Gastrocnemius medialis (tissue), 4 donors: ENCODE measurements at regions of chr10 and their contacts with region 1.

Region 1: DNA sequence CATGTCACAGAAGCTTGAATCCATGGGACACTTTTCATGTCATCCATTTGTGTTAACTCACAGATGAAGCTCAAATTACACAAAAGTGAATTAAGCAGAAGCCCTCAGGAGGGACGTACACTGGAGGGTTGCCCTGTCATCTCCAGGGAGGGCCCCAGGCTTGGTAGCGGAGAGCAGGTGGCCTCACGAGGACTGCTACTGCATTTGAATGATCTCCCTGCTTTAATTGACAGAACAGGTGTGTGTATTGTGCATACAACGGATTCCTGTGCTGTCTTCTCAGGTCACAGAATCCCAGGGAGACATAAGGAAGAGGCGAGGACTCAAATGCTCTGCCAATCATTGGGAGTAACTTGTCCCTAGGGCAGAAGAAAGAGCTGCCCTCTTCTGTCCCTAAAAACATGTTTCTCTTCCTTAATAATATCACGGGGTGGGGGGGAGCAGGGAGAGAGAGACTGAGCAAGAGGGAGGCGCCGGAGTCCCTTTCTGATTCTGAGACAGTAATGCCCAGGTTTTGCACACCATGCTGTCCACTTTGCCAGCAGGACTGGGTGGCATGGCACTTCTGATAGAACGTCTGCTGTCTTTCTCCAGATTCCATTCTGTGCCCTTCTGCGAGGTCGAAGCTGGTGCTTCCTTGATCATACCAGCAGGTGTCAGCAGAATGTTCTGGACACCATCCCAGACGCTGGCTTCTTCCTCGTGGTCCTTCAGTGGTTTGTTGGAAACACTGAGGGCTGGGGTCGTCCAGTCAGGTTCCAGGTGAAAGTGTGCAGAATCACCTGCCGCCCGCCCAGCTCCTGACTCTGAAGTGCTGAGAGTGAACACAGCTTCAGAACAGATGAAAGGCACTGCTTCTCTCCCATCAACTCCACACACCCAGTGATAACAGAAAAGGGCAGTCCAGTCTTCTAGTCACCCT is 26.2 kb upstream of the RASGEF1A start:
- DNase-seq: peak; percentile 14 to 43
- ATAC-seq: peak; percentile 68 to 91
- H3K4me3 ChIP-seq: peak overlapping the region in 2 of 4 donors; percentile 28
- H3K27ac ChIP-seq: no peak overlapping the region
- H3K4me1 ChIP-seq: peaks cover 6 to 7% of the 10 kb centered on the region in 2 donors
- H3K27me3 ChIP-seq: no peaks in the 10 kb centered on the region
- CTCF ChIP-seq: peak; percentile 45 to 76 (median 67)
- POLR2A ChIP-seq: no peak

Region 2: DNA sequence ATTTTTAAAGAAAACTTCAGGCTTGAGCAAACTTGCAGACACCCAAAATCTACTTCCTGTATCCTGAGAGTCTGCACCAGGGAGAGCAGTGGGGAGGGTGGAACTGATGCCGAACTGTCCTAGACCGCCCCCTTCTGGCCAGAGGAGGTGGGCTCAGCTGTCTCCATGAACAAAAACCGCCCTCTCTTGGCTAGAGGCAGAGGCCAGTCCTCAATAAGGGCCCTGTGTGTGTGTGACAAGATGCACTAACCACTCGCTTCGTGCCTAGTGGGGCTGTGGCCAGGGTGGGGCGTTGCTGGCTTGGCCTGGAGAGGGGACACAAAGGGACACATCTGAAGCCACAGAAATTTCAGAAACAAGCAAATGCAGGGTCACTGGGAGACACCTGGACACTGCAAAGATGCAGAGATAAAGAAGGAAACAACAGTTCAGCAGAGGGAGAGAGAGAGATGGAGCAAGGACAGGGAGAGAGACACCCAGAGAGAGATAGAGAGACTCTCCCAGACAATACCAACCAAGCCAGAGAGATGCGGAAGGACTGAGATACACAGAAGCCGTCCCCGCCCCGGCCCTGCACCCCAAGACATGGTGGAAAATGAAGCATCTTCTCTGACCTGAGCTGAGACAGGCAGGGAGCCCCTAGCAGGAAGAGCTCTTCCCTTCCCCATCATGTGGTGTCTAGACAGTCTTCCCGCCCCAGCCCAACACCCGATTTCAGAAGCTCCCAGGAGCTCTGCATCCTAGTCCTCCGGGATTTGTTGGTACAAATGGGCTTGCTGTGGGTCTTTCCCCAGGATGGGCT is 55.7 kb after region 1 on chr10:
- in situ Hi-C with region 1: loop called in 1 of 4 experiments (anchors 10 kb)
- intact Hi-C with region 1: loop called (anchors 2 kb)
- DNase-seq: peak; percentile 48 to 59
- ATAC-seq: peak; percentile 66 to 96
- H3K4me3 ChIP-seq: no peak overlapping the region
- H3K27ac ChIP-seq: no peak overlapping the region
- H3K4me1 ChIP-seq: no peaks in the 10 kb centered on the region
- H3K27me3 ChIP-seq: peaks cover 0 to 10% (median 8%) of the 10 kb centered on the region in 3 donors
- CTCF ChIP-seq: peak; percentile 41 to 82 (median 67)
- POLR2A ChIP-seq: no peak

Region 3: GRCh38 chr10:43461950-43462349 is 168.9 kb after region 1 on chr10:
- in situ Hi-C with region 1: loop called (anchors 5 kb)
- intact Hi-C with region 1: loop called (anchors 1 kb)
- DNase-seq: no peak
- ATAC-seq: peak in 1 of 2 donors; percentile 77
- H3K4me3 ChIP-seq: peak overlapping the region in 3 of 4 donors; percentile 25 to 34 (median 33)
- H3K27ac ChIP-seq: no peak overlapping the region
- H3K4me1 ChIP-seq: no peaks in the 10 kb centered on the region
- H3K27me3 ChIP-seq: no peaks in the 10 kb centered on the region
- CTCF ChIP-seq: peak; percentile 44 to 75 (median 71)
- POLR2A ChIP-seq: no peak